HepG2 (cell line): ENCODE measurements at regions of chr14 and their contacts with region 1.

Region 1: DNA sequence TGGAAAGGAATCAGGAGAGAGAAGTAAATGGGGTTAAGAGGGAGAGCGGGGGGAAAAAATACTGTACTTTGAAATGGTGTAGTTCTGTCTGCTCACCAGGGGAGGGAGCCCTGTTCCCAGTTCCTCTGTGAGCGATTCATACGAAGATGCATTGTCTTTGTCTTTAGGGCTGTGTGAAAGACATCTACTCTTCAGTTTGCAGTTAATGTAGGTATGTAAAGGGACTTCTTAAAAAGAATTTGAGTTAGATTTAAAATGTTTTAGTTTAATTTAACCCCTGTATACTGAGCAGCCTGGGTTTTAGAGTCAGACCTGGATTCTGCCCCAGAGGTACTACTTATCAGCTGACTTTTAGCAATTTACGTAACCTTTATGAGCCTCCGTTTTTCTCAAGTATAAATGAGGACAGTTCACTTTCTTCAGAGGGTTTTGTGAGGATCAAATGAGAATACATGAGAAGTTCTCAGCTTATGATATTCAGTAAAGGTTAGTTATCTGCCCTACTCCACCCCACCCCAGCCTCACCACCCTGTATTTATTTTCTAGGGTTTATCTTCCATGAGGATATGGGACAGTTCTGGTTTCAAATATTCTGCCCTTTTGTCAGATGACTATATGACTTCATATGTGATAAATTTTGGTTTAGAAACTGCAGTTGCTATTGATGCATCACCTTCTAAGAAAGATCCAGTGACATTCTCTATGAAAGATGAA is 82.5 kb upstream of the EVL start:
- DNase-seq: peak; percentile 39
- ATAC-seq: peak; percentile 80
- H3K4me3 ChIP-seq: no peak overlapping the region
- H3K27ac ChIP-seq: no peak overlapping the region
- H3K4me1 ChIP-seq: no peaks in the 10 kb centered on the region
- H3K27me3 ChIP-seq: no peaks in the 10 kb centered on the region
- CTCF ChIP-seq: peak; percentile 85
- EP300 ChIP-seq: no peak
- POLR2A ChIP-seq: no peak
- RAD21 ChIP-seq: peak; percentile 75

Region 2: GRCh38 chr14:99995700-99996356 is 13.1 kb after region 1 on chr14:
- CTCF ChIA-PET with region 1: no interaction called
- POLR2A ChIA-PET with region 1: no interaction called
- in situ Hi-C with region 1: no loop called
- intact Hi-C with region 1: loop called (anchors 1 kb)
- DNase-seq: peak; percentile 55
- ATAC-seq: peak; percentile 96
- H3K4me3 ChIP-seq: no peak overlapping the region
- H3K27ac ChIP-seq: no peak overlapping the region
- H3K4me1 ChIP-seq: no peaks in the 10 kb centered on the region
- H3K27me3 ChIP-seq: no peaks in the 10 kb centered on the region
- CTCF ChIP-seq: peak; percentile 71
- EP300 ChIP-seq: no peak
- POLR2A ChIP-seq: no peak
- RAD21 ChIP-seq: no peak

Region 3: DNA sequence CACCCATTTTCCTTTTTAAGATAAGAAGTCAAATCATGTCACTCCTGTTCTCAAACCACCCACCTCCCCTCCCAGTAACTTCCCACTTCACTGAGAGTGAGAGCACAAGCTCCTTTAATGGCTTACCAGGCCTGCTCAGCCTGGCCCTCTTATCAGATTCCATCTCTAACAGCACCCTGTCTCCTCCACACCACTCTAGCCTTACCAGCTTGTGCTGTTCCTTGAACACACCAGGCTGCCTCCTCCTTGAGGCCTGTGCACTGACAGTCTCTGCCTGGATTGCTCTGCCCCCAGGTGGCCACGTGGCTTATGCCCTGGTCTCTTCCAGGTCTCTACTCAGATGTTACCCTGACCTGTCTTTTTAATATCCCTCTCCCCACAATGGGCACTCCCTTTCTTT is 42.4 kb after region 1 on chr14:
- CTCF ChIA-PET with region 1: interaction called, 11 read pairs
- POLR2A ChIA-PET with region 1: no interaction called
- in situ Hi-C with region 1: loop called (anchors 5 kb)
- intact Hi-C with region 1: loop called (anchors 1 kb)
- DNase-seq: peak; percentile 35
- ATAC-seq: peak; percentile 92
- H3K4me3 ChIP-seq: no peak overlapping the region
- H3K27ac ChIP-seq: no peak overlapping the region
- H3K4me1 ChIP-seq: peaks cover 44% of the 10 kb centered on the region
- H3K27me3 ChIP-seq: no peaks in the 10 kb centered on the region
- CTCF ChIP-seq: peak; percentile 75
- EP300 ChIP-seq: no peak
- POLR2A ChIP-seq: no peak
- RAD21 ChIP-seq: peak; percentile 67; the same call in 1 of the 2 replicates

Region 4: DNA sequence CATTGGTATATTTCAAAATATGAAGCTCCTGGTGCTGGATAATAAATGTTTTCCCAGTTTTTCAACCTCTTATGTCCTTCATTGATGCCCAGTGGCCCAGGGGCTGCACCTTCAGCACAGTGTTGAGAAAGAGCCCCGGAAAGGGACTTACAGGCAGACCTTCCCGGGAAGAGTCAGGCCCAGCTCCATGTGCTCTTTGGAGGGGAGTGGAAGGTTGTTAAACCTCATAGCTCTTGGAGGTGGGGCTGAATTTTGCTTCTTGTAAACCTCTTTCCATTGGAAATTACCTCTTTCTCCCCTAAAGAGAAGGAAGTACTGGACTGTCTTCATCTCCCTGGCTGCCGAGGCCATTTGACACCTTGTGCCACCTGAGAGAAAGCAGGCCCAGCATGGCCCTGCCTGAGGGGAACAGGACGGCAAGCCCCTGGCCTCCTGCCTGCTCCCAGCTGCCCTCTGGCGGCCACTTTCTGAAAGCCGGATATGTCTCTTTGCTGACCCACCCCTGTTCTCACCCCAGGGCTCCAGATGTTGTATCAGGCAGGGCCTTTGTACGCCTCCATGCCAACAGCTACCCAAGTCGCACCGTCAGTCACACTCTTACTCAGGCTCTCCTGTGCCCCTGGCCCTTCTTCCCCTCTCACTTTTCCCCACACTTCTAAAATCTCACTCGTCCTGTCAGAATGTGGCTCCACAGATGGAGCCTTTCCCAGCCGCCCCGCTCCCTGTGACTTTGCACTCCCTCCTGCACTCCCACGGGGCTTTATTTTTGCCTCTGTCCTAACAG is 125.5 kb after region 1 on chr14:
- CTCF ChIA-PET with region 1: interaction called, 41 read pairs
- POLR2A ChIA-PET with region 1: no interaction called
- in situ Hi-C with region 1: loop called (anchors 10 kb)
- intact Hi-C with region 1: loop called (anchors 1 kb)
- DNase-seq: peak; percentile 55
- ATAC-seq: peak; percentile 98
- H3K4me3 ChIP-seq: no peak overlapping the region
- H3K27ac ChIP-seq: no peak overlapping the region
- H3K4me1 ChIP-seq: peaks cover 6% of the 10 kb centered on the region; the same call in 1 of the 2 replicates
- H3K27me3 ChIP-seq: no peaks in the 10 kb centered on the region
- CTCF ChIP-seq: peak; percentile 91
- EP300 ChIP-seq: no peak
- POLR2A ChIP-seq: no peak
- RAD21 ChIP-seq: peak; percentile 88